ENCODE measurements at regions of chr1 and their contacts with region 1.

Region 1: DNA sequence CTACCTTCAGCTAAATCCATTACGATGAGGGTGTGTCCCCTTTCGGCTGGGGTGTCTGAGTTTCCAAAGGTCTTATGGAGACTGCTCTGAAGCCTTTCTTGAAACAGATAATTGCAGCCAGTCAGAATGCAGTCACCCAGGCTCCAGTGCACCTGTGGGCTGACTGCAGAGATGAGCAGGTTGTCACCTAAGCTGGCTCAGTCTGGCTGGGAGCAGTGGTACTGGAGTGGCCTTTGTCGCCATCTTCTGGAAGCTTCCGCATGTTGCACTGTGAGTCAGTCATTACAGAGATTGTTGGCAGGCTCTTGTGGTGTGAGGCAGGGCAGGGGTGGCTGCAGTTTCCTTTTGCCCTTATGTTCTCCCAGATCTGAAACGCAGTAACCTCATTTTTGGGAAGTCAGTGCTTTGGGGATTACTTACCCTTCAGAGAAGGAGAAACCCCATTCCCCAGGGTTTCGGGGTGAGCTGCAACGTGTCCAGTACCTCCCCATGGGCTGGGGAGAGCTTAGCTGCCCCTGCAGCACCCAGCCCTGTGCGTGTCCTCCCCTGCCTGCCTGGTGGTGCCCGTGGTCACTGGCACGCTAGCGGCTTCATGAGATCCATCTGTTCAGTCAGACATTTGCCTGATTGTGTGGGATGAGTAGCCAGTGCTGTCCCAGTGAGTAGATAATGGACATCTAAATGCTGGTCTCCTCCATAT is 48.0 kb downstream of the SMYD2 start:
- DNase-seq: peak; percentile 26
- ATAC-seq: peak; percentile 92
- H3K4me3 ChIP-seq: no peak overlapping the region
- H3K27ac ChIP-seq: no peak overlapping the region
- H3K4me1 ChIP-seq: peaks cover 4% of the 10 kb centered on the region; the same call in 1 of the 2 replicates
- H3K27me3 ChIP-seq: no peaks in the 10 kb centered on the region
- CTCF ChIP-seq: peak; percentile 89 to 93 (median 91)
- EP300 ChIP-seq: no peak
- POLR2A ChIP-seq: no peak
- RAD21 ChIP-seq: peak; percentile 99

Region 2: DNA sequence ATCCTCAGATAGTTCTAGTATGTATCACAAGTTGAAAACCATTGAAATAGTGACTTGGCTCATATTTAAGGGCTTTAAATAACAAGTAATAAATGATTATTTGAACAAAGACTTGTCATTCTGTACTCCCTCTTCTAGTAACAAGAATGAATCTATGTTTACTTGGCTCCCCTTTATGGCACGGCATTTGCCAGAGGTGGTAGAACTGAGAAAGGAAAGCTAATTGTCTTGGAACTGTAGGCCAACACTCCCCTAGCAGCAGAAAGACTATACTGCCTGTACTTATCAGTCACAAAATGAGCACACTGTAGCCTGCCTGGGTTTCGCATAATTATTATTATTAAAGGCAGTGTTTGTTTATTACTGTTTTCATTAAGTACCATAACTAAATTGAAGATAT is 77.6 kb before region 1 on chr1:
- CTCF ChIA-PET with region 1: interaction called, 576 read pairs
- POLR2A ChIA-PET with region 1: no interaction called
- RAD21 ChIA-PET with region 1: interaction called, 4 read pairs
- SMC1A ChIA-PET with region 1: interaction called, 323 read pairs
- in situ Hi-C with region 1: no loop called
- intact Hi-C with region 1: no loop called
- DNase-seq: no peak
- ATAC-seq: no peak
- H3K4me3 ChIP-seq: no peak overlapping the region
- H3K27ac ChIP-seq: no peak overlapping the region
- H3K4me1 ChIP-seq: no peaks in the 10 kb centered on the region
- H3K27me3 ChIP-seq: 0 out of 4 replicates have a peak, but pooled peaks cover 0 to 3% of the 10 kb centered on the region in 2 experiments
- CTCF ChIP-seq: no peak
- EP300 ChIP-seq: no peak
- POLR2A ChIP-seq: no peak
- RAD21 ChIP-seq: no peak

Region 3: GRCh38 chr1:214303141-214303930 is 25.6 kb before region 1 on chr1:
- CTCF ChIA-PET with region 1: interaction called, 16 read pairs
- POLR2A ChIA-PET with region 1: no interaction called
- RAD21 ChIA-PET with region 1: interaction called, 10 read pairs
- SMC1A ChIA-PET with region 1: interaction called, 3 read pairs
- in situ Hi-C with region 1: no loop called
- intact Hi-C with region 1: no loop called
- DNase-seq: no peak
- ATAC-seq: no peak
- H3K4me3 ChIP-seq: no peak overlapping the region
- H3K27ac ChIP-seq: no peak overlapping the region
- H3K4me1 ChIP-seq: no peaks in the 10 kb centered on the region
- H3K27me3 ChIP-seq: no peaks in the 10 kb centered on the region
- CTCF ChIP-seq: no peak
- EP300 ChIP-seq: no peak
- POLR2A ChIP-seq: no peak
- RAD21 ChIP-seq: no peak

Region 4: GRCh38 chr1:214386747-214387146 is 57.8 kb after region 1 on chr1:
- CTCF ChIA-PET with region 1: interaction called, 17 read pairs
- POLR2A ChIA-PET with region 1: no interaction called
- RAD21 ChIA-PET with region 1: interaction called, 5 read pairs
- SMC1A ChIA-PET with region 1: interaction called, 5 read pairs
- in situ Hi-C with region 1: no loop called
- intact Hi-C with region 1: no loop called
- DNase-seq: no peak
- ATAC-seq: peak; percentile 42; the same call in 2 of the 3 replicates
- H3K4me3 ChIP-seq: no peak overlapping the region
- H3K27ac ChIP-seq: no peak overlapping the region
- H3K4me1 ChIP-seq: no peaks in the 10 kb centered on the region
- H3K27me3 ChIP-seq: peaks cover 0 to 2% of the 10 kb centered on the region in 2 experiments; a peak in 1 of 4 replicates
- CTCF ChIP-seq: no peak
- EP300 ChIP-seq: no peak
- POLR2A ChIP-seq: no peak
- RAD21 ChIP-seq: no peak

Region 5: DNA sequence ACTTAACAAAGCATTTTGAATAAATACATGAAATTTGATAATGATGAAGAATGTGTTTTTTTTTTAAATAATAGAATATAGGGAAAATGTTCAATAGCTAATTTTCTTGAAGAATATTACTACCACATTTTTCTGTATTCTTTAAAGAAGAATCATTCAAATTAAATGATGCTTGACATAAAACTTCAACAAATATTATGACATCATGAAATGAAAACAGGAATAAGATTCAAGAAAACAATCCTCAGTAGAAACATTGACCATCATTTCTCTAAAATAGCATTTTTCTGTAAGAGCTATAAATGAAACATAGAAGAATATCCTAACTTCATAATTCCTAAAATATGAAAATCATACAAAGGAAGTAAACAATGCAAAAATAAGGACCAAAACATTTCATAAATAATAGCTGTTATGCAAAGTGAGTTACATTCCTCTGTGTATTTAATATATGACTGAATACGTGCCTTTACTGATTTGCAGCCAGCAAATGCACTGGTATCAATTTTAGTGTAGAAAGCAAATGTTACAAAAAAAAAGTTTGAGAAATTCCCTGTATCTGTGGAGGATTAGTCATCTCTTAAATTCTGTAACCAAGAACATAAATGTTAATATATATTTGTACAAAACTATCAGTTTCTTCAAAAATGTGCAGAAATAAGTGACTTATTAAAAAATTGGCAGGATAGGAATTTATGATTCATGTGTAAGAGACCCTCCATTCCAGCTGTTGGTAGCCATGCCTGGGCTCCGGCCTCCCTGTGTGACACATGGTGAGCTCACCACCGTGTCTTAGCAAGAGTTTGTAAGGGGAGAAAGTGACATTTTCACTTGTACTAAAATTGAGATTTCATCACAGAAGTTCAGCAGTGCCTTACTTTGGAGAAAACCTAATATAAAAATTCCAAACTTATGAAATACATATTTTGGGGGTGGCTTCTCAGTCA is 237.5 kb after region 1 on chr1:
- CTCF ChIA-PET with region 1: interaction called, 15 read pairs
- POLR2A ChIA-PET with region 1: no interaction called
- RAD21 ChIA-PET with region 1: no interaction called
- SMC1A ChIA-PET with region 1: no interaction called
- in situ Hi-C with region 1: no loop called
- intact Hi-C with region 1: no loop called
- DNase-seq: no peak
- ATAC-seq: peak; percentile 67
- H3K4me3 ChIP-seq: no peak overlapping the region
- H3K27ac ChIP-seq: no peak overlapping the region
- H3K4me1 ChIP-seq: no peaks in the 10 kb centered on the region
- H3K27me3 ChIP-seq: no peaks in the 10 kb centered on the region
- CTCF ChIP-seq: no peak
- EP300 ChIP-seq: no peak
- POLR2A ChIP-seq: no peak
- RAD21 ChIP-seq: no peak

Region 6: GRCh38 chr1:214637722-214638458 is 309.0 kb after region 1 on chr1:
- CTCF ChIA-PET with region 1: interaction called, 35 read pairs
- POLR2A ChIA-PET with region 1: no interaction called
- RAD21 ChIA-PET with region 1: interaction called, 5 read pairs
- SMC1A ChIA-PET with region 1: interaction called, 3 read pairs
- in situ Hi-C with region 1: no loop called
- intact Hi-C with region 1: no loop called
- DNase-seq: no peak
- ATAC-seq: peak; percentile 72
- H3K4me3 ChIP-seq: no peak overlapping the region
- H3K27ac ChIP-seq: no peak overlapping the region
- H3K4me1 ChIP-seq: no peaks in the 10 kb centered on the region
- H3K27me3 ChIP-seq: no peaks in the 10 kb centered on the region
- CTCF ChIP-seq: peak; percentile 52 to 63 (median 56)
- EP300 ChIP-seq: no peak
- POLR2A ChIP-seq: no peak
- RAD21 ChIP-seq: peak; percentile 57

Region 7: DNA sequence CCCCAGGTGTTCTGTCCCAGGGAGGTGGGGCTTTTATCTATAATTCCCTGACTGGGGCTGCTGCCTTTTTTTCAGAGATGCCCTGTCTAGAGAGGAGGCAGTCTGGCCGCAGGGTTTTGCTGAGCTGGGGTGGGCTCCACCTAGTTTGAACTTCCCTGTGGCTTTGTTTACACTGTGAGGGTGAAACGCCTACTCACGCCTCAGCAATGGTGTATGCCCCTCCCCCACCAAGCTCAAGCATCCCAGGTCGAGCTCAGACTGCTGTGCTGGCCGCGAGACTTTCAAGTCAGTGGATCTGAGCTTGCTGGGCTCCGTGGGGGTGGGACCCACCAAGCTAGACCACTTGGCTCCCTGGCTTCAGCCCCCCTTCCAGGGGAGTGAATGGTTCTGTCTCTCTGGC is 398.4 kb after region 1 on chr1:
- CTCF ChIA-PET with region 1: no interaction called
- POLR2A ChIA-PET with region 1: no interaction called
- RAD21 ChIA-PET with region 1: no interaction called
- SMC1A ChIA-PET with region 1: no interaction called
- in situ Hi-C with region 1: no loop called
- intact Hi-C with region 1: no loop called
- DNase-seq: no peak
- ATAC-seq: no peak
- H3K4me3 ChIP-seq: no peak overlapping the region
- H3K27ac ChIP-seq: no peak overlapping the region
- H3K4me1 ChIP-seq: no peaks in the 10 kb centered on the region
- H3K27me3 ChIP-seq: no peaks in the 10 kb centered on the region
- CTCF ChIP-seq: no peak
- EP300 ChIP-seq: no peak
- POLR2A ChIP-seq: no peak
- RAD21 ChIP-seq: no peak

Measured in GM12878 (cell line).